GM13976 (cell line): ENCODE measurements at regions of chr4 and their contacts with region 1.

Region 1: GRCh38 chr4:48963042-48963679 is 22.9 kb upstream of the CWH43 start:
- DNase-seq: peak; percentile 51
- CTCF ChIP-seq: peak; percentile 94

Region 2: DNA sequence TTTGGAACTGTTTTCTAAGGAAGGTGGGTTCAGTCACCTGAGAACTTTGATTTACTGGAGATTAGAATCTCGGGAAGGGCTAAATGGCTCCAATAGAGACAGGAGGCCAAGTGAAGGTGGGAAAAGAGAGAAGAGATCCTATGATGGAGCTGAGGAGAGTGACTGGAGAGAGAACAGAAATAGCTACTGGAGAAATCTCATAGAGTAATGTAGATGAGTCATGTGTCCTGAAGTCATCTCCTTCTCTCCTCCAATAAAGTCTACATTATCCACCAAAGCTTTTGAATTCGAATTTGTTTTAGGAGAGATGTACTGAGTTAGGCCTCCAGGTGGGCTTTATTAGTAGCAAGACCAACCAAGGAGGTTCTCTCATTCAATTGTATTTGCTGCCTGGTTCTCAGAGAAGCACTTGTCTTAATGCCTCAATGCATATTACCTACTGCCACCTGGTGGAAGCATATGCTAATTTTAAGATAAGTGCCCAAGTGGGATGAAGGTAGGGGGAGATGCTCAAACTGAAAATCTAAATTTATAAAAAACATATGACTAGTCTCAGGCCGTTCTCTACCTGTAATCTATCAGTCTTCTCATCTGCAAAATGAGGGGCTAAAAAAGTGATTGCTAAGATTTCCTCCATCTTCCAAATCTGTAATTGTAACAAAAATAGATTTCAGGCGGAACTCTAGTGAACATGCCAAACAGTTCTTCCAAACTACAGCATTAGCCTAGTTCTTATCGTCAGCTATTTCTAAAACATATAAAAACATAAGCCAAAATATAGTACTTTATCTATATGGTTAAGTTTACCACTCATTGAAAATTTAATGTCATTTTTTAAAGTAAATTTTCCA is 853.5 kb before region 1 on chr4:
- in situ Hi-C with region 1: loop called (anchors 25 kb)
- DNase-seq: peak; percentile 59
- CTCF ChIP-seq: peak; percentile 64

Region 3: DNA sequence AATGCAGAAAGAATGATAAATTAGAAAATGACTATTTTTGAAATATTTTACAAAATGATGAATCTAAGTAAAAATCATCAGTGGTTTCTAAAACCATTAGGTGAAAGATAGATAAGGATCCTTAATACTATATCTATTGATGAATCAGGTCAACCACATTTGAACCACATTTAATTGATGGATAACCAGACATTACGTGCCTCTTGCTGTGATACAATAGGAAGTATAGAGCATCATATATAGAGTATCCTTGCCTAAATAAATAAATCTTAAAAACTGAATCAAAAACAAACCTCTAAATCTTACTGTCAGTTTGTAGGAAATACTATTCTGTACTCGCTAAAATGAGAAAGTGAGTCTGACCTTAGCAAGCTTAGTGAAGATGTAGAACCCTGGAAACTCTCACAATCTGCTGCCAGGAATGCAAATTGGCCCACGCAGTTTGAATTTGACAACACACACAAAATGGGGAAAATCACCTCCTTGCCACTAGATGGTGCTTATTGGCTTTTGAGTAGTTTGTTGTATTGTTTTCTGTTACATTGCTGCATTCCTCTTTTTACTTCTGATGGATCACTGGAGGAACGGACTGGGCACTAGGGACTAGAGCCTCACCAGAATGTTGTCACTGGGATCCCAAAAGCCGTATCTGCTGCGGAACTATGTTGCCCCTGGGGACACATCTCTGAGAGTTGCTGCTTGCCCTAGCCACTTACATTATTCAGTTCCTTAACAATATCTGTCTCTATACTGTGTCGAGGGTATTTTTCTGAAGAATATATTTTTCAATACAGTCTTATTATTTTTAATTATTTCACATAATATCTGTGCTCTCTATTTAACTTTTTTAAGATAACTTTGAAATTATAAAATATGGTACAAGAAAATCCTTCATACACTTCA is 647.2 kb before region 1 on chr4:
- in situ Hi-C with region 1: loop called (anchors 25 kb)
- DNase-seq: peak; percentile 63
- CTCF ChIP-seq: peak; percentile 45

Region 4: DNA sequence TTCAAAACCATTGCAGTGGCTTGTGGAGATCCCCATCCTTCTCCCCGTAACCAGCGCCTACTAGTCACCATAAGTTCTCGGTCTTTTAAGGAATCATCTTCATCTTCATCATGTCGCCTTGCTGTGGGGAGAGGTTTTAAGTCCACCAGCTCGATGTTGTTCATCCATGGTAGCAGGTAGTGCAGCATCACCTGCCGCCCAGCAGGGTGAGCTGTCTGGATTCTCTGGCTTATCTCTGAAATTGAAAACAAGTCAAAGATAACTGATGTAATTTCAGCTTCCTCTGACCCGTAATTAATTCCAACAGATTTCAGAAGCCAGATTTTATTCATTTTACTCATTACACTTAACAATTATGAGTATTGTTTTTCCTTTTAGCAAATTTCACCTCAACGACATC is 405.7 kb before region 1 on chr4:
- in situ Hi-C with region 1: loop called (anchors 25 kb)
- DNase-seq: no peak
- CTCF ChIP-seq: no peak

Region 5: GRCh38 chr4:49044270-49044669 is 81.1 kb after region 1 on chr4:
- in situ Hi-C with region 1: no loop called
- DNase-seq: no peak
- CTCF ChIP-seq: no peak